Panc1 (cell line): ENCODE measurements at regions of chr18 and their contacts with region 1.

Region 1: GRCh38 chr18:28432339-28432738 is 255.4 kb upstream of the CDH2 start:
- DNase-seq: no peak
- ATAC-seq: no peak
- H3K4me3 ChIP-seq: no peak overlapping the region
- H3K27ac ChIP-seq: no peak overlapping the region
- H3K4me1 ChIP-seq: no peaks in the 10 kb centered on the region
- H3K27me3 ChIP-seq: no peaks in the 10 kb centered on the region
- CTCF ChIP-seq: no peak

Region 2: DNA sequence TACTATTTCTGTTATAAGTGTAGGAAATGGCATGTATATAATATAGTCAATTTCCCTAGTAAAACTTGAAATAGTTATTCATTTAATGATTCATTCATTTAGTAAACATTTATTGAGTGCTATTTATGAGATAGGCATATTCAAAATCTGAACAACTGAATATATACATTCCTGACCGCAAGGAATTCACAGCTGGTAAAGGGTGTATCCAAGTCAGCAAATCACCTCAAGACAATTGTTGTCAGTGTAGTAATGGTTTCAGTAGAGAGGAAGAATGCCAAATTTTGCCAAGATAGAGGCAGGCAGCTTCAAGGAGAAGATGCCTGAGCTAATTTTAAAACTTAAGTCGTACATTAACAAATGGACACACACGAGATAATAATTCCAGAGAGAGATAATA is 1157.4 kb before region 1 on chr18:
- CTCF ChIA-PET with region 1: no interaction called
- POLR2A ChIA-PET with region 1: no interaction called
- in situ Hi-C with region 1: no loop called
- intact Hi-C with region 1: no loop called
- DNase-seq: no peak
- ATAC-seq: no peak
- H3K4me3 ChIP-seq: no peak overlapping the region
- H3K27ac ChIP-seq: no peak overlapping the region
- H3K4me1 ChIP-seq: no peaks in the 10 kb centered on the region
- H3K27me3 ChIP-seq: no peaks in the 10 kb centered on the region
- CTCF ChIP-seq: no peak

Region 3: GRCh38 chr18:28407681-28408080 is 24.7 kb before region 1 on chr18:
- CTCF ChIA-PET with region 1: interaction called, 11 read pairs
- POLR2A ChIA-PET with region 1: no interaction called
- in situ Hi-C with region 1: no loop called
- intact Hi-C with region 1: no loop called
- DNase-seq: no peak
- ATAC-seq: no peak
- H3K4me3 ChIP-seq: no peak overlapping the region
- H3K27ac ChIP-seq: no peak overlapping the region
- H3K4me1 ChIP-seq: no peaks in the 10 kb centered on the region
- H3K27me3 ChIP-seq: no peaks in the 10 kb centered on the region
- CTCF ChIP-seq: no peak

Region 4: DNA sequence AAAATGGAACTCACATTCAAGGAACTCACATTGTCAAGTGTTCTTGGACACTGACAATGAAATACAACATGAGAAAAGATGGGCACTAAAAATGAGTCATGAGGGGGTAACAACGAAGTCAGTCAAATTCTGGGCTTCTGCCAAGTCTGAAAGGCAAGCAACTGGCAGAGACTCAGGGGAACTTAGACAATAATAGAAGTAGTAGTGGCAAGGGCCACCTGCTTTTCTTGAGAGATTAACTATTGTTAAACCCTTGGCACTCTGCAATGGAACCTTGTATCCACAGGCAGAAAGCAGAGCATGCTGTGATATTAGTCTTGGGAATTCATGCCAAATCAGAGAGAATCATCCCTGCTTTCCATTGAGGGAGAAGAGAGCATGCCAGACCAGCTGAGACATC is 127.2 kb after region 1 on chr18:
- CTCF ChIA-PET with region 1: no interaction called
- POLR2A ChIA-PET with region 1: no interaction called
- in situ Hi-C with region 1: no loop called
- intact Hi-C with region 1: no loop called
- DNase-seq: no peak
- ATAC-seq: no peak
- H3K4me3 ChIP-seq: no peak overlapping the region
- H3K27ac ChIP-seq: no peak overlapping the region
- H3K4me1 ChIP-seq: no peaks in the 10 kb centered on the region
- H3K27me3 ChIP-seq: no peaks in the 10 kb centered on the region
- CTCF ChIP-seq: no peak